ENCODE measurements at regions of chr5 and their contacts with region 1.

Region 1: DNA sequence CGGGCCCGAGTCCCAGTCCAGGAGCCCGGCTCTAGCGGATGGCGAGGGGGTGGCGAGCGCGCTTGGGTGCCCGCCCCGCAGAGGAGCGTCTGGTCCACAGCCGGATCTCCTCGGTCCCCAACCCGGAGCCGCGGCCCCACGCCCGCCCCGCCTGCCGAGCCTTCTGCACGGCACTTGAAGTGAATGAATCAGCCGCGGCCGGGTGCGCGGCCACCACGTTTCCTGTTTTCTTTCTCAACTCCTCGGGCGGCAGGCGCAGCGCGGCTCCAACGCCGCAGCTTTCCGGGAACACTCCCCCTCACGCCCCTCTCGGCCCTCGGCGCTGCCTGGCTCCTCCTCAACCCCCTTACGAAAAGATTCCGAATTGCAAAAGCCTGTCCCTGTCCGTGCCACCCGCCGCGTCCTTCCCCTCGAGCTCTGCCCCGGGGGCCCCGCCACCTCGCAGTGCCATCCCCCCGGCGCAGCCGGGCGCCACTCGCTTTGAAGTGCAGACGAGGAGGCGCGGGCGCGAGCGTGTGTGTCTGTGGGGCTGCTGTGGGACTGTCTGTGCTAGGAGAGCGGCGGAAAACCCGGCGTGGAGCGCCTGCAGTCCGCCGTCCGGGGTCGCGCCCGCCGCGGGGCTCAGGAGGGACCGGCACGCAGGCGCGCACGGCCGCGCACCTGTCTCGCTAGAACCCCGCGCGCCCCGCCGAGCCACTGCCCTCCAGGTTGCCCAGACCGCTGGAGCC is 456.6 kb downstream of the RAB3C start:
- DNase-seq: peak; percentile 60
- H3K4me3 ChIP-seq: peak overlapping the region; percentile 52
- H3K27ac ChIP-seq: peak overlapping the region; percentile 30 to 67
- H3K4me1 ChIP-seq: no peaks in the 10 kb centered on the region
- H3K27me3 ChIP-seq: no peaks in the 10 kb centered on the region
- CTCF ChIP-seq: no peak
- POLR2A ChIP-seq: peak; percentile 54

Region 2: DNA sequence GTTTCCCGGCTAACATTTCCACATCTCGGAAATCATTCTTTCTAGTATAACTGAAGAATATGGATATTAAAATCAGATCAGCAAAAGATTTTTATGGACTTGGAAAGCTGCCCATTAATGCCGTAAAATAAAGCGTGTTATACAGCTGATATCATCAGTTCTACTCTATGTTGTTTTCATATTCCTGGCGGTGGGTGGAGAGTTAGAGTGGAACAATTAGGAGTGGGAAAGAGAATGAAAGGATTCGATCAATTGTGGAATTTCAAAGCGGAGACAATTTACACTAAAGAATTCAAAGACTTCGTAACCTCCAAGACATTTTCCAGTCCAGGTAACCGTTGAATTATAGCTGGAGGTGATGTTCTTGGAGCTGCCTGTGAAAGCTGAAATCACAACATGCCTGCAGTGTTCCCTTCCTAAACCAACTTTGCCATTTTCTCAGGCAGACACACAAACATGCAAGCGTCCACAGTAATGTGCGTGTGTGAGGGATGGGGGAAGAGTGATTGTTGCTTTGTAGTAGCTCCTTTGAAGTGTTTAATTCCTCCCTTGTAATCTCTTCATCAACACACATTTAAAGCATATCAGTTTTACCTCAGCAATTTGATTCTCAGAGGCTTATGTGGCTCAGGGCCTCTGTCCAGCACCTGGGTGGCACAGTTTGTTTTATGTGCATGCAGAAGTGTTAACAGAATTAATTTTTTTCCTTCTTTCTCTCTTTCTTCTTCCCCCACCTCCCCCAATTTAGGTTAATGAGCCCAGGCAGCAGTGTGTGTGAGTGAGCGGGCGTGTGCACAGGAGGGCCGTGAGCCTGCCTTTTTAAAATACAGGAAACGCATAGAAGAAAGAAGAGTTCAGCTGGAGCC is 87.5 kb after region 1 on chr5:
- intact Hi-C with region 1: loop called (anchors 10 kb)
- DNase-seq: no peak
- H3K4me3 ChIP-seq: peak overlapping the region; percentile 8 to 10
- H3K27ac ChIP-seq: peak overlapping the region; percentile 49 to 70
- H3K4me1 ChIP-seq: peaks cover 6% of the 10 kb centered on the region
- H3K27me3 ChIP-seq: no peaks in the 10 kb centered on the region
- CTCF ChIP-seq: no peak
- POLR2A ChIP-seq: no peak

Region 3: GRCh38 chr5:59174248-59174844 is 134.9 kb after region 1 on chr5:
- intact Hi-C with region 1: loop called (anchors 5 kb)
- DNase-seq: peak; percentile 22
- H3K4me3 ChIP-seq: no peak overlapping the region
- H3K27ac ChIP-seq: no peak overlapping the region
- H3K4me1 ChIP-seq: no peaks in the 10 kb centered on the region
- H3K27me3 ChIP-seq: no peaks in the 10 kb centered on the region
- CTCF ChIP-seq: peak; percentile 46 to 74 (median 61)
- POLR2A ChIP-seq: no peak

Region 4: DNA sequence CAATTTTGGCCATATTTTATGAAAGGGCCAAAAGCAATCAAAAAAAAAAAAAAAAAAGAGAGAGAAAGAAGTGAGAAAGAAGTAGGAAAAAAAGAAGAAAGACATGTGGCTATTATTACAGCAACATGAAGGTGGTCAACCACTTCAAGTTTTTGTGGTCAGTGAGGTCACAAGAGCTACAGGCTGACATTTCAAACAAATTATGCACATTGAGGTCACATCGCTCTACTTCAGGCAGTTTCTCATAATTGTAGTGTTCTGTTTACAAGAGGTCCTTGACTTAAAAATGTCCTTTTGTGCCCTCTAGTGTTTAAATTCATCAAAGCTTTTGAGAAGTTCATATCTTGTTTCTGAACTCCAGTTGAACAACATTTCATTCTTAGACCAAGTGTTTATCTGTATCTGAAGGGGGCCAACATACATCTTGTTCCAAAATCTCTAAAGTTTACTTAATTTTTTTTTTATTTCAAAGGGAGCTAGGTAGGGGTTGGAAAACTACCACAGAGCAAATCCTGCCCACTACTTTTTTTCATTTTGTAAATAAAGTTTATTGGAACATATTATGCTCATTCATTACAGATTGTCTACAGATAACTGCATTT is 341.0 kb after region 1 on chr5:
- intact Hi-C with region 1: loop called (anchors 10 kb)
- DNase-seq: peak; percentile 34
- H3K4me3 ChIP-seq: no peak overlapping the region
- H3K27ac ChIP-seq: peak overlapping the region; percentile 31
- H3K4me1 ChIP-seq: no peaks in the 10 kb centered on the region
- H3K27me3 ChIP-seq: no peaks in the 10 kb centered on the region
- CTCF ChIP-seq: peak; percentile 37 to 83 (median 72)
- POLR2A ChIP-seq: no peak

Measured in prostate gland (tissue), 2 donors.